MCF 10A (cell line): ENCODE measurements at regions of chr1 and their contacts with region 1.

Region 1: DNA sequence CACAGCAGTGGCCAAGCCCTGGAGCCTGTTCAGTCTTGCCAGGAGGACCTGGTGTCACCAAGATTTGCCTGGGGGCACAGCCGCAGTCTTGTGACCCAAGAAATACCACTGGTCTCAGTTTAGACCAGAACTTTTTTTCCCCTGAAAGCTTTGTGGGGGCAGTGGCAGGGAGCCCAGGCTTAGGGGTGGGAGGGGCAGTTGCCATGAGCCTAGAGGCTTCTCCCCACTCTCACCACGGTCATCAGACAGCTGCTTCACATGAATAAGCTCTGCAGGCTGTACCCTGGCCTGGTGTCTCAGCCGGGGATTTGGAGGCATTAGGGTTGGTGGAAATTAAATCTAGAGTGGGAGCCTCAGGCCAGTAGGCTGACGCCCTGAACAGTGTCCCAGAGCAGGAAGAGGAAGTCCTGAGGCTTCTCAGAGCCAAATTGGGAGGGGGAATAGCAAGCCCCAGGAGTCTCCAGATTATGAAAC is 73.7 kb downstream of the SLC16A1 start:
- DNase-seq: no peak
- H3K4me3 Mint-ChIP-seq: no peak overlapping the region
- H3K27ac Mint-ChIP-seq: peak overlapping the region; percentile 43
- H3K4me1 Mint-ChIP-seq: peaks cover 20% of the 10 kb centered on the region
- H3K27me3 Mint-ChIP-seq: no peaks in the 10 kb centered on the region
- CTCF ChIP-seq: no peak

Region 2: DNA sequence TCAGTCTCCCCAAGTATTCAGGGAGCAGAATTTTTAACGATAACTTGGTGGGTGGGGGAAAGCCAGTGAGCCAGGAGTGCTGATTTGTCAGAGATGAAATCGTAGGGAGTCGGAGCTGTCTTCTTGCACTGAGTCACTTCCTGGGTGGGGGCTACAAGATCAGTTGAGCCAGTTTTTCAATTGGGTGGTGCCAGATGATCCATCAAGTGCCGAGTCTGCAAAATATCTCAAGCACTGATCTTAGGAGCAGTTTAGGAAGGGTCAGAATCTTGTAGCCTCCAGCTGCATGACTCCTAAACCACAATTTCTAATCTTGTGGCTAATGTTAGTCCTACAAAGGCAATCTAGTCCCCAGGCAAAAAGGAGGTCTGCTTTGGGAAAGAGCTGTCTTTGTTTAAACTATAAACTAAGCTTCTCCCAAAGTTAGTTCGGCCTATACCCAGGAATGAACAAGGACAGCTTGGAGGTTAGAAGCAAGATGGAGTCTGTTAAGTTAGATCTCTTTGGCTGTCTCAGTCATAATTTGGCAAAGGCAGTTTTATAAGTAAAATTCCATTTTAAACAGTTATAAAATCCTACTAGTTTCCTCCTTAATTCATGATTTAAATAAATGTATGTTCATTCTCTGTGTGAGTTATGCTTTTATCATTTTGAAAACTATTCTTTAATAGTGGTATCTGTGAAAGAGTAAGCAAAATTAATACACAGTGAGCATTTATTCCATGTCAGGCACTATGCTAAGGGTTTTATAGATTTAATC is 21.9 kb after region 1 on chr1:
- CTCF ChIA-PET with region 1: interaction called, 11 read pairs
- POLR2A ChIA-PET with region 1: interaction called, 21 read pairs
- intact Hi-C with region 1: no loop called
- DNase-seq: peak; percentile 89
- H3K4me3 Mint-ChIP-seq: peak overlapping the region; percentile 24
- H3K27ac Mint-ChIP-seq: peak overlapping the region; percentile 92
- H3K4me1 Mint-ChIP-seq: peaks cover 35% of the 10 kb centered on the region
- H3K27me3 Mint-ChIP-seq: no peaks in the 10 kb centered on the region
- CTCF ChIP-seq: no peak

Region 3: GRCh38 chr1:112925015-112925414 is 42.7 kb after region 1 on chr1:
- CTCF ChIA-PET with region 1: interaction called, 12 read pairs
- POLR2A ChIA-PET with region 1: no interaction called
- intact Hi-C with region 1: no loop called
- DNase-seq: no peak
- H3K4me3 Mint-ChIP-seq: no peak overlapping the region
- H3K27ac Mint-ChIP-seq: peak overlapping the region; percentile 36
- H3K4me1 Mint-ChIP-seq: peaks cover 9% of the 10 kb centered on the region
- H3K27me3 Mint-ChIP-seq: no peaks in the 10 kb centered on the region
- CTCF ChIP-seq: no peak

Region 4: GRCh38 chr1:113036639-113037321 is 154.5 kb after region 1 on chr1:
- CTCF ChIA-PET with region 1: interaction called, 125 read pairs
- POLR2A ChIA-PET with region 1: interaction called, 12 read pairs
- intact Hi-C with region 1: no loop called
- DNase-seq: peak; percentile 70
- H3K4me3 Mint-ChIP-seq: no peak overlapping the region
- H3K27ac Mint-ChIP-seq: peak overlapping the region; percentile 46
- H3K4me1 Mint-ChIP-seq: peaks cover 7% of the 10 kb centered on the region
- H3K27me3 Mint-ChIP-seq: no peaks in the 10 kb centered on the region
- CTCF ChIP-seq: no peak